ENCODE measurements at regions of chr5 and their contacts with region 1.

Region 1: DNA sequence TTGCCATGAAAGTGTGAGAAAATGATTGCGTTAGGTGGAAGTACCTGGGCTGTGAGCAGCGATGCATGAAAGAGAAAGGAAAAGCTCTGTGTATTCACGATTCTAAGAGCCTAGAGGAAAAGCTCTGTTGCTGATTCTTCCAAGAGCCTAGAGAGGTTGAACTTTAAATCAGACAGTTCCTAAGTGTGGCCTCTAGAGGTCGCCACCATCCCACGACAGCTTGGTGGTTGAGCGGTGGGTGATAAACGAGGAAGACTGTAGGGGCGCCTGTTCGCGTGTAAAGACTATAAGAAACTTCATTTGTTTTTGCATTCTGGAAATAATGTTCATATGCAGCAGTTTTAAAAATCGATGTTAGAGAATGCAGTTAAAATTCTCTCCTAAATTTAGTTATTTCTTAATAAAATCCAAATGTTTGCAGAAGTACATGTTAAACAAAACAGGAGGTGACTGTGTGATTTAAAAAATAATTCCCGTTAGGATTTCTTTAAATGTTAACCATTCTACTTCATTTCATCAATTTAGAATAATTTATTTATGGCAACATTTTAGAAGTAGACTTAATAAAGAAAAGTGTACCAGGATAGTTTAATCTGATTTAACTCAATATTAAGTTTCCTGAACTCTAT is 107.7 kb downstream of the TENT4A start:
- DNase-seq: peak; percentile 89
- H3K4me3 Mint-ChIP-seq: no peak overlapping the region
- H3K27ac Mint-ChIP-seq: no peak overlapping the region
- H3K4me1 Mint-ChIP-seq: peaks cover 3% of the 10 kb centered on the region
- H3K27me3 Mint-ChIP-seq: peaks cover 35% of the 10 kb centered on the region

Region 2: GRCh38 chr5:5421961-5422818 is 1398.8 kb before region 1 on chr5 and contains the start of gene ICE1:
- intact Hi-C with region 1: loop called (anchors 10 kb)
- DNase-seq: peak; percentile 98
- H3K4me3 Mint-ChIP-seq: peak within 1 kb of the TSS; percentile 97
- H3K27ac Mint-ChIP-seq: peak within 1 kb of the TSS; percentile 98
- H3K4me1 Mint-ChIP-seq: peaks cover 22% of the 10 kb centered on the region
- H3K27me3 Mint-ChIP-seq: no peaks in the 10 kb centered on the region
- total RNA-seq, gene ICE1: 35.6 and 36.9 TPM in 2 replicates

Region 3: DNA sequence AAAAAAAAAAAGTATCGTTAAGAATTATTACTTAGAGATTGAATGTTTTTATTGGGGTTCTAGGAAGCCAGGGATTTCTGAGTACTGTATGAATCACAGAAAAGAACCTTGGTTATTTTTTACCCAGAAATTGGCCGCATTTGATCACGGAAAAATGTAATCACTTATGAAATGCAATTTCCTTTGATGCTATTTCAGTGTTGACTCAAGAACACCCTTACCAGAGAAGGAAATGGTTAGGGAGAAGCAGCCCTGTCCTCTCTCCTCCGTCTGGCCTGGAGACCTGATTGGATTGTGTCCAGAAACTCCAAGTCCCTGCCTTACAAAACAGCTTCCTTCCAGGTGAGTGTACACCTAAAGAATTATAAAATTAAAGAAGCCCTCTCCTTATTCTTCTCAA is 559.3 kb before region 1 on chr5:
- intact Hi-C with region 1: loop called (anchors 10 kb)
- DNase-seq: peak; percentile 67
- H3K4me3 Mint-ChIP-seq: peak overlapping the region; percentile 56
- H3K27ac Mint-ChIP-seq: peak overlapping the region; percentile 92
- H3K4me1 Mint-ChIP-seq: peaks cover 21% of the 10 kb centered on the region
- H3K27me3 Mint-ChIP-seq: no peaks in the 10 kb centered on the region

Region 4: DNA sequence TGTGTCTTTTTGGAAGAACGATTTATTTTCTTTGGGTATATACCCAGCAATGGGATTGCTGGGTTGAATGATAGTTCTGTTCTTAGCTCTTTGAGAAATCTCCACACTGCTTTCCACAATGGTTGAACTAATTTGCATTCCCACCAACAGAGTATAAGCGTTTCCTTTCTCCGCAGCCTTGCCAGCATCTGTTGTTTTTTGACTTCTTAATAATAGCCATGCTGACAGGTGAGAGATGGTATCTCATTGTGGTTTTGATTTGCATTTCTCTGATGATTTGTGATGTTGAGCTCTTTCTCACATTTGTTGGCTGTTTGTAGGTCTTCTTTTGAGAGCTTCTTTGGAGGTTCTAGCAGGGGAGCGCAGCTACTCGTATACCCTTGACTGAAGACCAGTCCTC is 26.9 kb after region 1 on chr5:
- intact Hi-C with region 1: no loop called
- DNase-seq: no peak
- H3K4me3 Mint-ChIP-seq: no peak overlapping the region
- H3K27ac Mint-ChIP-seq: no peak overlapping the region
- H3K4me1 Mint-ChIP-seq: peaks cover 6% of the 10 kb centered on the region
- H3K27me3 Mint-ChIP-seq: no peaks in the 10 kb centered on the region

Region 5: GRCh38 chr5:7745882-7746610 is 925.1 kb after region 1 on chr5:
- intact Hi-C with region 1: loop called (anchors 2 kb)
- DNase-seq: peak; percentile 80
- H3K4me3 Mint-ChIP-seq: no peak overlapping the region
- H3K27ac Mint-ChIP-seq: no peak overlapping the region
- H3K4me1 Mint-ChIP-seq: no peaks in the 10 kb centered on the region
- H3K27me3 Mint-ChIP-seq: no peaks in the 10 kb centered on the region

Region 6: DNA sequence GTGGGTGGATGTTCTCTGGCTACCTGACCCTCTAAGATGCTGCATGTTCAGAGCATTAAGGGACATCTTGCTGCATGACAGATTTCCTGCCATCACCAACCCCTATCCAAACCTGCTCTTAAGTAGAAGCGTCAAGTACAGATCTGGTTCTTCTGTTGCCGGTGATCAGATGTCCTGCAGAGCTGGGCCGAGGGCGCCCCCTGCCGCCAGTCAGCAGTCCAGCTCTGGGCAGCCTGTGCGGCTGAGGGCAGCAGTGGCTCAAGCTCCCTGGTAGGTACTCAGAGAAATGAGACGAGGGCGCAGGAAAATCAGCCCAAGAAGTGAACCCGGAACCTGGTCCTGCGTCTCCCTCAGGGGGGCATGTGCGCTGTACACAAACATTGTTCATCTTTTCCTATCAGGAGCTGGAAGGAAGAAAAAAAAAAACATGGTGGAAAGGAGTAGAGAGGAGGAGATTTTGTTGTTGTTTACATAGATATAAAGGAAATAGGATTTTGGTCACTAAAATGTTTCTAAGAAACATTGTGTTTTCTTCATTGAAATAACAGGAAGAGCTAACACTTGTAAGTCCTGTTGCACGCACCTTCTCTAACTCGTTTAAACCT is 934.1 kb after region 1 on chr5:
- intact Hi-C with region 1: loop called (anchors 2 kb)
- DNase-seq: peak; percentile 80
- H3K4me3 Mint-ChIP-seq: no peak overlapping the region
- H3K27ac Mint-ChIP-seq: no peak overlapping the region
- H3K4me1 Mint-ChIP-seq: peaks cover 5% of the 10 kb centered on the region
- H3K27me3 Mint-ChIP-seq: peaks cover 11% of the 10 kb centered on the region

Region 7: DNA sequence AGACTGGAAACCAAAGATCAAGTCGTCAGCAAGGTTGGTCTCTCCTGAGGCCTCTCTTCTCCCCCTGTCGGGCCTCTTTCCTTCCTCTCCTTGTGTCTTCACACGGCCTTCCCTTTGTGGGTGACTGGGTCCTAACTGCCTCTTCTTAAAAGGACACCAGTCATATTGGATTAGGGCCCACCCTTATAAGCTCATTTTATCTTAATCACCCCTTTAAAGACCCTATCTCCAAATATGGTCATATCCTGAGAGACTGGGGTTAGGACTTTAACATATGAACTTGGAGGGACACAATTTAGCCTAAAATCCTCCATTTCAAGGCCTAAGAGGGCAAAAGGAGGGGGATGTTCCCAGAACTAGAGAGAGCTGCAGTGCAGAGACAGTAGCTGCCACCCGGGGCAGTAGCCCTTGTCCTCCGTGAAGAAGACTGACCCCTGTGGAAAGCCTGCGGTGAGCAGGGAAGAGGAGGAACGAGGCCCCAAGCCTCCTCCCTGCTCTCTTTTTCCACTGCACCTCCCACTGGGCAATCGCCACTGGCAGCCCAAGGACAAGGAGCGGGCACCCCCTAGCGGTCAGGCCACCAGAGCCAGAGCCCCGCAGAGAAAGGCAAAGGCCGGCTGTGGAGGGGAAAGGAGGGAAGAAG is 995.0 kb after region 1 on chr5:
- intact Hi-C with region 1: loop called (anchors 5 kb)
- DNase-seq: peak; percentile 89
- H3K4me3 Mint-ChIP-seq: no peak overlapping the region
- H3K27ac Mint-ChIP-seq: no peak overlapping the region
- H3K4me1 Mint-ChIP-seq: peaks cover 4% of the 10 kb centered on the region
- H3K27me3 Mint-ChIP-seq: peaks cover 10% of the 10 kb centered on the region

Region 8: GRCh38 chr5:7856855-7857254 is 1035.9 kb after region 1 on chr5:
- intact Hi-C with region 1: loop called (anchors 10 kb)
- DNase-seq: peak; percentile 83
- H3K4me3 Mint-ChIP-seq: no peak overlapping the region
- H3K27ac Mint-ChIP-seq: peak overlapping the region; percentile 50
- H3K4me1 Mint-ChIP-seq: peaks cover 30% of the 10 kb centered on the region
- H3K27me3 Mint-ChIP-seq: peaks cover 10% of the 10 kb centered on the region